Esophagus squamous epithelium (tissue), 5 donors: ENCODE measurements at regions of chr6 and their contacts with region 1.

Region 1: DNA sequence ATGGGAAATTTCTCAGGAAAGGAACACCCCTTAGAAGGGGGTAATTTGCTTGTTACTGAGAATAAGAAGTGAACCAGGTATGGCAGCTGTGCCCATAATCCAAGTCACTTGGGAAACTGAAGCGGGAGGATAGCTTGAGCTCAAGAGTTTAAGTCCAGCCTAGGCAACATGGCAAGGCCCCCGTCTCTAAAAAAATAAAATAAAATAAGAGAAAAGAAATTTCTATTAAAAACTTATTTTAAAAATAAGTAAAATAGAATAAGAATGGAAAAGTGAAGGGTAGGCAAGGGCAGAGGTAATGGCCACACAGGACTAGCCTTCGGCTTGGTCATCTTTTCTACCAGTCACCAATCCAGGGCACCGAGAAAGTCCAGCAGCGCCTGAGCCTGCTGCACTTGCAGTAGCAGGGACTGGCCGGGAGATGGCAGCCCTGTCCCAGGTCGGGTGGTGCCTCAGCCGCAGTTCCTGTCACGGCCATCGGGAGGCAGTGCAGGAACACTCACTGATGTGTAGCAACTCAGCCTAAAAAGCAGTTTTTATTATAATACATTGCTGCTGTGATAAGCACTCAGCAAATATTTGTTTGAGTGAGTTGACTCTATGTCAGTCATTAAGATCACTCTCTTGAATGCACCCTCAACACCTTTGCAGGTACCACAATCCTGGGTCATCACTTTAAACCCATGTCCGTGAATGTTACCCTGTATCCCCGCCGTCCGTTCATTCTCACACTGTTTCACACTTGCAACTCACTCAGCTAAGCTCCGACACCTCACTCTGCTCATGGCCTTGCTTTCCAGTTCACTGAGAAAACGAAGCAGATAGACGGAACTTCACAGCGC is 23.2 kb upstream of the GCM1 start:
- DNase-seq: peak; percentile 20
- H3K4me3 ChIP-seq: no peak overlapping the region
- H3K27ac ChIP-seq: no peak overlapping the region
- H3K4me1 ChIP-seq: no peaks in the 10 kb centered on the region
- H3K27me3 ChIP-seq: no peaks in the 10 kb centered on the region
- CTCF ChIP-seq: peak; percentile 100
- POLR2A ChIP-seq: no peak

Region 2: GRCh38 chr6:53216301-53216700 is 44.5 kb after region 1 on chr6:
- intact Hi-C with region 1: no loop called
- DNase-seq: no peak
- H3K4me3 ChIP-seq: no peak overlapping the region
- H3K27ac ChIP-seq: no peak overlapping the region
- H3K4me1 ChIP-seq: no peaks in the 10 kb centered on the region
- H3K27me3 ChIP-seq: no peaks in the 10 kb centered on the region
- CTCF ChIP-seq: no peak
- POLR2A ChIP-seq: no peak

Region 3: GRCh38 chr6:53251033-53251672 is 79.3 kb after region 1 on chr6:
- intact Hi-C with region 1: no loop called
- DNase-seq: no peak
- H3K4me3 ChIP-seq: no peak overlapping the region
- H3K27ac ChIP-seq: no peak overlapping the region
- H3K4me1 ChIP-seq: peaks cover 0 to 4% (median 0%) of the 10 kb centered on the region in 3 donors
- H3K27me3 ChIP-seq: no peaks in the 10 kb centered on the region
- CTCF ChIP-seq: no peak
- POLR2A ChIP-seq: no peak

Region 4: DNA sequence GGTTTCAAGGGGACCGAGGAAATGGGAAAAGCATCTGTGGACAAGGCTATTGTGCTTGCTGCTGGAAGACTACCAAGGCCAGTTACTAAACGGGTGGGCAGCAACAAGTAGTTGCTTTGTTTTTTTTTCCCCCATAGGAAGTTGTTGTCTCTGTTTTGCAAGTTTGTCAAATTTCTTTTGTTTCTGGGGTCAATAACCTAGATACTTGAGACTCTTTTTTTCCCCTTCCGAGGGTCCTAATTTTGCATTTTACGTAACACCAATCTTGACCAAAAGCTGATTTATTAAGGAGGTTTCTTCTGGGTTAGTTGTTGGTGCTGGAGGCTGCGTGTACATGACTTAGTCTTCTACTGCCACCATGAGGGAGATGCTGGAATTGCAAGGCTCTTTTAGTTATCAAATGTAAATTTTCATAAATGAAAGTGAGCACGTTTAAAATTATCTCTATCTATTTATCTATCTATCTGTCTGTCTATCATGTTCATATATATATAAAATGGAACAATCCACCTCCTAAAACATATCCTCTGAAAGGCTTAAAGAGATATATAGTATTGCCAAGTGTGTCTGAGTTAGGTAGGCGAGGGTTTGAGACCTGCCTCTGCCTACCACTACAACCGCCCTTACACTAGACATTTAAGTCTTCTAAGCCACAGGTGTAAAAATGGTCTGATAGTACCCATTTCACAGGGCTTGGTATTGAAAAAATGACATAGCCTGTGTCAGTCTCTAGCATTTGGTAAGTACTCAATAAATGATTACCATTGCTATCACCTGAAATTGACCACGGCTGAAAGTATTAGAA is 312.9 kb after region 1 on chr6:
- intact Hi-C with region 1: loop called (anchors 5 kb)
- DNase-seq: peak; percentile 7
- H3K4me3 ChIP-seq: no peak overlapping the region
- H3K27ac ChIP-seq: no peak overlapping the region
- H3K4me1 ChIP-seq: peaks cover 0 to 8% (median 0%) of the 10 kb centered on the region in 3 donors
- H3K27me3 ChIP-seq: peaks cover 0 to 25% (median 0%) of the 10 kb centered on the region in 4 donors
- CTCF ChIP-seq: peak; percentile 84 to 97 (median 96)
- POLR2A ChIP-seq: no peak

Region 5: GRCh38 chr6:53504512-53504911 is 332.7 kb after region 1 on chr6:
- intact Hi-C with region 1: no loop called
- DNase-seq: no peak
- H3K4me3 ChIP-seq: no peak overlapping the region
- H3K27ac ChIP-seq: no peak overlapping the region
- H3K4me1 ChIP-seq: no peaks in the 10 kb centered on the region
- H3K27me3 ChIP-seq: no peaks in the 10 kb centered on the region
- CTCF ChIP-seq: no peak
- POLR2A ChIP-seq: no peak